ENCODE measurements at regions of chr1 and their contacts with region 1.

Region 1: GRCh38 chr1:1059494-1060280 is 14.4 kb downstream of the RNF223 start:
- DNase-seq: peak; percentile 46 to 88 (median 81)
- H3K4me3 ChIP-seq: peak overlapping the region; percentile 37 to 75 (median 61)
- H3K27ac ChIP-seq: no peak overlapping the region
- H3K27me3 ChIP-seq: peaks cover 0 to 50% (median 9%) of the 10 kb centered on the region in 45 donors
- CTCF ChIP-seq: peak in 12 of 56 donors; percentile 1 to 62 (median 26)

Region 2: GRCh38 chr1:983799-984473 is 75.8 kb before region 1 on chr1:
- intact Hi-C with region 1: loop called (anchors 2 to 10 kb)
- DNase-seq: peak in 4 of 10 donors; percentile 35 to 74 (median 44)
- H3K4me3 ChIP-seq: peak overlapping the region in 33 of 59 donors; percentile 2 to 56 (median 35)
- H3K27ac ChIP-seq: no peak overlapping the region
- H3K27me3 ChIP-seq: peaks cover 0 to 15% (median under 1%) of the 10 kb centered on the region in 45 donors
- CTCF ChIP-seq: peak in 55 of 56 donors; percentile 40 to 94 (median 87)

Region 3: DNA sequence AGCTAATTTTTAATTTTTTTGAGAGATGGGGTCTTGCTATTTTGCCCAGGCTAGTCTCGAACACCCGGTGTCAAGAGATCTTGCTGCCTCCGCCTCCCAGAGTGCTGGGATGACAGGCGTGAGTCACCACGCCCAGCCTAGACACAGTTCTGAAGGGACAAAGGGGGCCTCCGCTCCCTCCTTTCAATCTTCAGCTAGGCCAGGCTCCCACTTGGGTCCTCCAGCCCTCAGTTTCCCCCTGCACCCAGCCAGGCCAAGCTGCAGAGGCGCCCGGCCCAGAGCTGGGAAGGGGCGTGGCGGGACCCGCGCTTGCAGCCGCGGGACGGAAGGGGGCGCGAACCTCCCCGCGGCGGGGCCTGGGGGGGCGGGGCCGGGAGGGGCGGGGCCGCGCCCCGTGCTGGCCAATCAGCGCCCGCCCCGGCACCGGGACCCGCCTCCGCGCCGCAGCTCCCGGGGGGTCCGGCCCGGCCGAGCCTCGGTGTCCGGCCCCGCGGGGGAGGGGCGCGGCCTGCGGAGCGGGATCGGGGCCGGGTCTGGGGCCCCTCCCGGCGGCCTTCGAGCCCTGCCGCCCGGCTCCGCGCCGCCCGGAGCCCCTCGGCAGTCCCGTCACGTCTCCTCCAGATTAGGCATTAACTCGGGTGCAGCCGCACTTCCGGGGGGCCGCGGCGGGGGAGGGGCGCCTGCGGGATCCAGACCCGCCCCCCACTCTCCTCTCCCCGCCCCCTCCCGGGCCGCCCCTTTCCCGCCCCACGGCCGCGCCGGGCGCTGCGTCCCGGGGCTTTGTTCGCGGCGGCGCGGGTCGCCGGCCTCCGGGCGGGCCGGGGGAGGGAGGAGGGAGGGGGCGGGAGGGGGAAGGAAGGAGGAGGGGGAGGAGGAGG is 40.3 kb before region 1 on chr1:
- intact Hi-C with region 1: loop called (anchors 5 to 10 kb)
- DNase-seq: peak; percentile 34 to 87 (median 72)
- H3K4me3 ChIP-seq: peak overlapping the region in 57 of 59 donors; percentile 42 to 90 (median 70)
- H3K27ac ChIP-seq: peak overlapping the region in 55 of 59 donors; percentile 69 to 97 (median 89)
- H3K27me3 ChIP-seq: no peaks in the 10 kb centered on the region
- CTCF ChIP-seq: peak in 51 of 56 donors; percentile 21 to 75 (median 52)

Region 4: GRCh38 chr1:1157426-1157913 is 97.8 kb after region 1 on chr1:
- intact Hi-C with region 1: no loop called
- DNase-seq: peak; percentile 37 to 79 (median 66)
- H3K4me3 ChIP-seq: peak overlapping the region; percentile 51 to 96 (median 75)
- H3K27ac ChIP-seq: peak overlapping the region; percentile 87 to 100 (median 98)
- H3K27me3 ChIP-seq: peaks cover 0 to 13% (median 0%) of the 10 kb centered on the region in 45 donors
- CTCF ChIP-seq: peak in 1 of 56 donors; percentile 4

Measured in dorsolateral prefrontal cortex (tissue), 120 donors.